ENCODE measurements at regions of chr3 and their contacts with region 1.

Region 1: GRCh38 chr3:111967651-111968274 is 11.1 kb upstream of the ABHD10 start:
- DNase-seq: peak; percentile 59
- H3K4me3 ChIP-seq: no peak overlapping the region
- H3K27ac ChIP-seq: no peak overlapping the region
- H3K27me3 ChIP-seq: no peaks in the 10 kb centered on the region
- CTCF ChIP-seq: peak; percentile 92

Region 2: DNA sequence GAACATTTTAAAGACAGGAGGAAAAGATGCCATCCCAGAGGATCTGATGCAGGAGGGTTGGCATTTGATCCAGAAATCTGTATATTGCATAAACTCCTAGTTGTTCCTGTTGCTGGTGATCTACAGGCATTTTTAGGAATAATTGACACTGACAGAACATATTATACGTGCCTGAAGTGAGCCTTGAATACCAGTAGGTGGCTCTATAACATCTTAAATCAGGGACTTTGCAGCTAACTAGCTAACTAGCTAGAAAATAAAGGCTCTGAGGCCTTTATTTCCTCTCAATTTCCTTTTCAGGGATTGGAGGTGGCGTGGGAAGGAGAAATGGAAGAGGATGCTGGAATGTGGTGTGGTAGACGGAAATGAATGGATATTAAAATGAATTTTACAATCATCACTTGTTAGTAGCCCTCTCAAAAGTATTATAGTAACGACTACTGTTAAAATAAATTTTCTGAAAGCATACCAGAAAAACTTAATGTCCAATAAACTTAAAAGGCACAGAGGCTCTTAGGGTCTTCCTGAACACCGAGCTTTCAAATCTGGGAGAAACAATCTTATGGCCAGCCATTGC is 298.8 kb before region 1 on chr3:
- CTCF ChIA-PET with region 1: interaction called, 31 read pairs
- POLR2A ChIA-PET with region 1: no interaction called
- DNase-seq: peak; percentile 37
- H3K4me3 ChIP-seq: no peak overlapping the region
- H3K27ac ChIP-seq: no peak overlapping the region
- H3K27me3 ChIP-seq: no peaks in the 10 kb centered on the region
- CTCF ChIP-seq: peak; percentile 76

Region 3: DNA sequence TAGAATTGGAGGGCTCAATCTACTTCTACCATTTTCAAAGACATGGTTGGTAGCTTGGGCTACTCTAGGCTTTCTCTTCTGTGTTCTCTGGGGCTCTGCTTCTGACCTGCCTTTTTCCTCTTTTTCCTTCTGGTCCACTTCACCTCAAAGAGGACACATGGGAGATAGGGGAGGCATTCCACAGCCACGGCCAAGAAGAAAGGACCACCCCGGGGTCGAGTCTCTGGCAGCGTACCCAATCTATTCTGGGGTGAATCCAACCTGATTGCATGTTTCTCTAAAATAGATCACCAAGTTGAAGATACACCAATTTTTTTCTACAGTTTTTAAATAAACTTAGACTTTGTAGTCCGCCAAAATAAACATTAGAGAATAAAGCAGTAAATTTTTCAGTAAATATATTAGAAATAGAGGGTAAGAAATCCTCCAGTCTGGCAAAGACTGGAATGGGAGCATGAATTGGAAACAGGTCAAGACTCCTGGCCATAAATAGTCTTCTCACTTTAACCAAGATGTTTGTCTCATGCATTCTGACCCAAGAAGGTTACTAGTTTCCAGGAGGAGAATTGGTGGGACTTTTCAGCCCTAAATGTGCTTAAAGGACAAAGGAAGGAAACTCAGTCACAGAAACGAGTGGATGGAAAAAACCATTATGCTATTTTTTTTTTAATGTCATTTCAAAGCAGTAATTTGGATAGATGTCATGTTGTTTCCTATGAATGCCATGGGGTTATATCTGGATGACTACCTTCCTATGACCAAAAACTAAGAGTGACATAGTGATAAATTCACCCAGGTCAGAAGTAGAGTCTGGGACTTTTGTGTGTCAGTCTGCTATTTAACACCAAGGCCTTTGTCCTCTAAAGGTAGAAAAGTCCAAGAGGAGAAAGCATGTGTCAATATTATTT is 180.0 kb before region 1 on chr3:
- CTCF ChIA-PET with region 1: interaction called, 11 read pairs
- POLR2A ChIA-PET with region 1: no interaction called
- DNase-seq: no peak
- H3K4me3 ChIP-seq: no peak overlapping the region
- H3K27ac ChIP-seq: no peak overlapping the region
- H3K27me3 ChIP-seq: no peaks in the 10 kb centered on the region
- CTCF ChIP-seq: no peak

Region 4: DNA sequence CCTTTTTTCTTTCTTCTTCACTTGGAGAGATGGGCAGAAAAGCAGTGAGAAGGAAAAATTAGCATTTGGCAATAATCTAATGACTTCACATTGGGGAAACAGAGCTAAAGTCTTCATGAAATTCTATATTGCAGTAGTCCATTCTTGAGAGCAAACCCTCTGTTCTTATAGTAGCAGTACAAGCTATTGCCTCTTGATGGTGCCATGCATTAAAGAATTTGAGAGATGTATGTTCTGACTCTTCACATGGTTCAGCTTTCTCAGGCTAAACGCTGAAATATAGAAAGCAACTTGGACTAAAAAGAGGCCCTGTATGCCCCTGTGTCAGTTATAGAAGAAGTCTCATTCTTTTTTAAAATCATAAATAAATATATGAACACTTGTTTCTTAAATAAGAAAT is 72.7 kb before region 1 on chr3:
- CTCF ChIA-PET with region 1: interaction called, 93 read pairs
- POLR2A ChIA-PET with region 1: no interaction called
- DNase-seq: no peak
- H3K4me3 ChIP-seq: no peak overlapping the region
- H3K27ac ChIP-seq: no peak overlapping the region
- H3K27me3 ChIP-seq: no peaks in the 10 kb centered on the region
- CTCF ChIP-seq: peak; percentile 74

Region 5: DNA sequence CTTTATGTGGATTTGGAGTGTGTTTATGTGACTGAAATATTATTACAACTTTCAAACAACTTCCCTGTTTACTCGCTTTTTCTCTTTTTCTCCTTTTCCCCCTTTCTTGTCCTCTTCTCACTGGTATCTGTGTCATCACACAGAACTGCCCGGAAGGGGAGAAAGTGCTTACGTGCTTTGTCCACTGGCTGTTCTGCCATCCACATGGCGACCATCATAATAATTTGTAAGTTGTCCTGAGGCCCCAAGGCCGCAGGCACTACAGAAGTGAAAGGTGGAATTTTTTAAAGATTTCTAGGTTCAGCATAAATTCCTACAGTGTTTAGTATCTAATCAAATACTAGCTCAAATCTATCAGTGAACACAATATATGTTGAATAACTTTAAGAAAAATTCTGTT is 15.7 kb before region 1 on chr3:
- CTCF ChIA-PET with region 1: interaction called, 25 read pairs
- POLR2A ChIA-PET with region 1: interaction called, 3 read pairs
- DNase-seq: no peak
- H3K4me3 ChIP-seq: no peak overlapping the region
- H3K27ac ChIP-seq: no peak overlapping the region
- H3K27me3 ChIP-seq: no peaks in the 10 kb centered on the region
- CTCF ChIP-seq: no peak

Region 6: DNA sequence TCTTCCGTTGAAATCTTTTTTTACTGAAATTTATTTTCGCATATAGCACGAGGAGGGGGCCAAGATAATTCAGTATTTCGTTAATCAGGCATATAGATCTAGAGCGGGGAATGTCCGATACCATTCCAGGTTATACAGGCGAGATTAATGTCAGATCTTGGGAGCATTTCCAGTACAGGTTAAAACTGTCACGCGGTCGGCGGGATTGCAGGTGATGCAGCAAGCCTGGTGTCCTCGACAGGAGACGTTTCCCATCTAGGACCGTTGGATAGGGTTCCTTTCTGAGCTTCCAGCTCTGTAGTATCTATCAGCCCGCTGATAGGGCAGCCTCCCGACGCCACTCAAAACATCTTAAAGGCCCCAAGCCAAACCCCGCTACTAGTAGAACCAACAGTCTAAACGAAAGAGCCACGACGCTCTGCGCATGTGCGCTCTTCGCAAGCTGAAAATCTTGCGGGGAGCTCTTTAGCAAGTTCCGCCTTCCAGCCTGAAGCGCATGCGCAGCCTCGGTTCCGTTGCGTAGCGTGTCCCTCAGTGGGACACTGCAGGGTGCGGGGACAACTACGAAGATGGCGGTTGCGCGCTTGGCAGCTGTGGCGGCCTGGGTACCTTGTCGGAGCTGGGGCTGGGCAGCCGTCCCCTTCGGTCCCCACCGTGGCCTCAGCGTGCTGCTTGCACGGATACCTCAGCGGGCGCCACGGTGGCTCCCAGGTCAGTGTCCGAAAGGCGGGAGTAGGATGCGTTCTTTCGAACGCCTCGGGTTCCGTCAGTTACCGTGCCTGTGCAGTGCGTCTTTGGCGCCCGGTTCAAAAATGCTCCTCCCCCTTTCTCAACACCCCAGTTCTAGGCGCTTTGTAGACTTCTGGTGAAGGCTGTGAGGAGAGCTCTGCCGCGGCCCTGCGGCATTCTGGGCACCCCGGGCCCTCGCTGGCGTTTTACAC is 11.0 kb after region 1 on chr3 and contains the start of gene ABHD10:
- CTCF ChIA-PET with region 1: interaction called, 37 read pairs
- POLR2A ChIA-PET with region 1: interaction called, 4 read pairs
- DNase-seq: peak; percentile 97
- H3K4me3 ChIP-seq: peak within 1 kb of the TSS; percentile 92
- H3K27ac ChIP-seq: peak within 1 kb of the TSS; percentile 47
- H3K27me3 ChIP-seq: no peaks in the 10 kb centered on the region
- CTCF ChIP-seq: no peak
- polyA plus RNA-seq, gene ABHD10: 28.8 and 37.5 TPM in 2 replicates

Region 7: DNA sequence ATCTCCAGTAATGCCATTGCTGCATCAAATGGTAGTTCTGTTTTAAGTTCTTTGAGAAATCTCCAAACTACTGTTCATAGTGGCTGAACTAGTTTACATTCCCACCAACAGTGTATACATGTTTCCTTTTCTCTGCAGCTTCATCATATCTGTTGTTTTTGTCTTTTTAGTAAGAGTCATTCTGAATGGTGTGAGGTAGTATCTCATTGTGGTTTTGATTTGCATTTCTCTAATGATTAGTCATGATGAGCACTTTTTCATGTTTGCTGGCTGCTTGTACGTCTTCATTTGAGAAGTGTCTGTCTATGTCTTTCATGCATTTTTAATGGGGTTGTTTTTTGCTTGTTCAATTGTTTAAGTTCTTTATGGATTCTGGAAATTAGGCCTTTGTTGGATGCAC is 175.5 kb after region 1 on chr3:
- CTCF ChIA-PET with region 1: no interaction called
- POLR2A ChIA-PET with region 1: no interaction called
- DNase-seq: no peak
- H3K4me3 ChIP-seq: no peak overlapping the region
- H3K27ac ChIP-seq: no peak overlapping the region
- H3K27me3 ChIP-seq: no peaks in the 10 kb centered on the region
- CTCF ChIP-seq: no peak

Measured in AG04450 (cell line).